ENCODE measurements at regions of chr17 and their contacts with region 1.

Region 1: GRCh38 chr17:60720763-60721531 is 43.3 kb downstream of the BCAS3 start:
- DNase-seq: peak; percentile 10
- H3K4me3 ChIP-seq: no peak overlapping the region
- H3K27ac ChIP-seq: no peak overlapping the region
- H3K4me1 ChIP-seq: peaks cover 0 to 4% (median 0%) of the 10 kb centered on the region in 4 donors
- H3K27me3 ChIP-seq: no peaks in the 10 kb centered on the region
- CTCF ChIP-seq: peak; percentile 70 to 93 (median 89)
- EP300 ChIP-seq: no peak
- POLR2A ChIP-seq: no peak

Region 2: DNA sequence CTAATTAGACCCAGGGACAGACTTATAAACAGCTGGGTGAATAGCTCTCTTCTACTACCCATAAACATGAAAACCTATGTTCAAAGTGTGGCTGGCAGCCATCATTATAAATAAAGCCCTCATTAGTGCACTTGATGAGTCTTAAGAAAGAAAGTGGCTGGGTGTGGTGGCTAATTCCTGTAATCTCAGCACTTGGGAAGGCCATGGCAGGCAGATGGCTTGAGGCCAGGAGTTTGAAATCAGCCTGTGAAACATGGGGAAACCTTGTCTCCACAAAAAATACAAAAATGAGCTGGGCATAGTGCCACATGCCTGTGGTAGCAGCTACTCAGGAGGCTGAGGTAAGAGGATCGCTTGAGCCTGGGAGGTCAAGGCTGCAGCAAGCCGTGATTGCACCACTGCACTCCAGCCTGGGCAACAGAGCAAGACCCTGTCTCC is 166.6 kb before region 1 on chr17:
- in situ Hi-C with region 1: no loop called
- intact Hi-C with region 1: no loop called
- DNase-seq: no peak
- H3K4me3 ChIP-seq: no peak overlapping the region
- H3K27ac ChIP-seq: no peak overlapping the region
- H3K4me1 ChIP-seq: no peaks in the 10 kb centered on the region
- H3K27me3 ChIP-seq: no peaks in the 10 kb centered on the region
- CTCF ChIP-seq: no peak
- EP300 ChIP-seq: no peak
- POLR2A ChIP-seq: no peak

Region 3: DNA sequence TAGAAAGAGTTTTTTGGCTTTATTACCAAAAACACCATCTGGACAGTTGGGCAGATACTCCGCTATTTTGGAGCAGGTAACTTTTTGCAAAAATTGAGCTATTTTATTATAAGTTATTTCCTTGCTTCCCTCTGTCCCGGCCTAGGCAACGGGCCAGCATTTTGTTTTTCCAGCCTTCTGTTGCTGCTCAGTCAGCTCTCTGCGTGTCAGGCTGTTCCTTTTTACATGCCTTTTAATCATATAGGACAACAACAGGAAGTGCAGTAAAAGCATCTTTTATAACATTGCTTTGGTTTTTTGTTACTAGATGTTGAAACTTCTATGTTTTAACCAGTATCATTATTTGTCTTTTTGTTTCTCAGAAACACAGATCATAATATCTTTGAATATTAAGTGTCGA is 90.6 kb before region 1 on chr17:
- in situ Hi-C with region 1: no loop called
- intact Hi-C with region 1: no loop called
- DNase-seq: peak; percentile 15
- H3K4me3 ChIP-seq: no peak overlapping the region
- H3K27ac ChIP-seq: no peak overlapping the region
- H3K4me1 ChIP-seq: no peaks in the 10 kb centered on the region
- H3K27me3 ChIP-seq: no peaks in the 10 kb centered on the region
- CTCF ChIP-seq: no peak
- EP300 ChIP-seq: no peak
- POLR2A ChIP-seq: no peak

Region 4: DNA sequence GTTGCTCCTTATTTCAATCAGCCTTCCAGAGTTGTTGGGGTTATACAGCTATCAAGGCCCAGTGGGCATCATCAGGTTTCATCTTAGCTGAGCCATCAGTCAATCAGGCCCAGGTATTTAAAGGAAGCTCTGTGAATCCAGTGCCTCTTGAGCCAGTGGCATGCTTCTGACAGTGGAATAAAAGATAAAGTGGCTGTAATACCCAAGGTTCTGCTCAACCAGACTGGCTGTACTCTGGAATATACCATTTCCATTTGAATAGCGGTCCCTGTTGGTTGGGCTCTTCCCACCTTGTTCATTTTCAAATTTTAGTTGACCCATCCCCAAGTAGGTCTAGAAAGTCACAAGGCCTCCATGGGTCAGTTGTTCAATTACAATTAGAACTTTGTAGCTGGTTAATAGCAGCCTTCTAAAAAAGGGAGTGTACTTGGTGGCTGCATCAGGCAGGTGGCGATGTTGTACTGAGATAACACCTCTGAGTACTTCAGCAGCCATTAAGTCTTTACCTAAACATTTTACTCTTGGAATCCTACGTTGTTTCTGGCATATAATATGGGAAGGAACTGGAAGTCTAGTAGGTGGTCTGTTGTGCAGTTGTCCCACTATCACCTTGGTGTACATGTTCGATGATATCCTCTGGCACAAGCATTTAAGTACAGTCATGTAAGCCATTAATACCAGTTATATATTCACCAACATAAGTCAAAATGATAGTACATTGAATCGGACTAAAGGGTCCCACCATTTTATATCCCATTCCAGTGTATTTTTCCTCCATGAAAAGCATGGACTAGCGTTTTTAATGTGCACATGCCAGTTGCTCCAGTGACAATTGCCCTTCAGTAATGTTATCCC is 250.8 kb after region 1 on chr17:
- in situ Hi-C with region 1: loop called in 1 of 4 experiments (anchors 25 kb)
- intact Hi-C with region 1: no loop called
- DNase-seq: peak; percentile 28
- H3K4me3 ChIP-seq: no peak overlapping the region
- H3K27ac ChIP-seq: no peak overlapping the region
- H3K4me1 ChIP-seq: no peaks in the 10 kb centered on the region
- H3K27me3 ChIP-seq: no peaks in the 10 kb centered on the region
- CTCF ChIP-seq: peak; percentile 36 to 55 (median 46)
- EP300 ChIP-seq: no peak
- POLR2A ChIP-seq: no peak

Measured in transverse colon (tissue), 4 donors.